MCF 10A (cell line): ENCODE measurements at regions of chr5 and their contacts with region 1.

Region 1: DNA sequence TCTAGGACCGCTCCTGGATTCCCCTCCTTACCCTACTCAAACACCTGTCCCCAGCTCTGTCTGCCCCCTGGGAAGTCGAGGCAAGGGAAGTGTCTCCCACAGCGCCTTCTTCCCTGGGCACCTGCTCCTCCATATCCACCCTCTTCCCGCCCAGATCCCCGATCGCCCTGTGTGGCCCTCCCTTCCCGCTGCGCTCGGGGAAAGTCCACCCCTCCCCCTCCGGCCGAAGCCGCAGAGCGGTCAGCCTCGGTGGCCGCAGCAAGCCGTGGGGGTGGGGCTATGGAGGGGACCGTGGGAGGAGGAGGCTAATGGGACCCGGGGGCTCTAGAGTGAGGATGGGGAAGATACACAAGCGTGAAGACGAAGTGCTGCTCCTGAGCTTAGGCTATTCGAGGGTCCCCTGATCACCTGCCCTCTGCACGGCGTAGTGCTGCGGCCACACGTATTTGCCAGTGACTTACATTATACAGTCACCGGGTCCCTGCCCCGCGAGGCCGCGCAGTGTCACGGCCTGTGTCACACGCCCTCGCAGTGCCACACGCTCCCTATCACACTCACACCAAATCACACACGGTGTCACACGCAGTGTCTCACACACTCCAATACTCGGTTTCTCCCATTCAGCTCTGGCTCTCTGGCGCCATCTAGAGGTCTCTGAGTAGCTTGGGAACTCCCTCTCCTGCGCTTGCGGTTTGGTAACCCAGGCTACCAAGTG is 658 bp upstream of the PCDH1 start:
- DNase-seq: peak; percentile 100
- H3K4me3 Mint-ChIP-seq: peak overlapping the region; percentile 80
- H3K27ac Mint-ChIP-seq: no peak overlapping the region
- H3K4me1 Mint-ChIP-seq: peaks cover 30% of the 10 kb centered on the region
- H3K27me3 Mint-ChIP-seq: peaks cover 55% of the 10 kb centered on the region
- CTCF ChIP-seq: peak; percentile 99

Region 2: DNA sequence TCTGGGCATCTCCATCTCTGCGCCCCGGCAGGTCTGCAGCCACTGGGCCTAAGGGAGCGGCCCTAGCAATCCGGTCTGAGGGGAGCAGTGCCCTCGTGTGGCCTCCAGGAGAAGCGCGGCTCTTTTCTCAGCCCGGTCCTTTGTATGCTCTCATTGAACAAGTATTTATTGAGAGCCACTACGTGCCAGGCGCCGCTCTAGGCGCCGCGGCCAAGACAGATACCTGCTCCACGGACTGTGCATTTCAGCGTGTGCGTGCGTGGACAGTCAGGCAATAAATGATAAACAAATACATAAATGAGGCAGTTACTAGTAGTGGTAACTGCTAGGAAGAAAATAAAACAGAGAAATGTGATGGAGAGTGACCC is 1521.2 kb before region 1 on chr5:
- CTCF ChIA-PET with region 1: no interaction called
- POLR2A ChIA-PET with region 1: no interaction called
- intact Hi-C with region 1: no loop called
- DNase-seq: peak; percentile 91
- H3K4me3 Mint-ChIP-seq: peak overlapping the region; percentile 33
- H3K27ac Mint-ChIP-seq: no peak overlapping the region
- H3K4me1 Mint-ChIP-seq: peaks cover 8% of the 10 kb centered on the region
- H3K27me3 Mint-ChIP-seq: no peaks in the 10 kb centered on the region
- CTCF ChIP-seq: peak; percentile 97

Region 3: DNA sequence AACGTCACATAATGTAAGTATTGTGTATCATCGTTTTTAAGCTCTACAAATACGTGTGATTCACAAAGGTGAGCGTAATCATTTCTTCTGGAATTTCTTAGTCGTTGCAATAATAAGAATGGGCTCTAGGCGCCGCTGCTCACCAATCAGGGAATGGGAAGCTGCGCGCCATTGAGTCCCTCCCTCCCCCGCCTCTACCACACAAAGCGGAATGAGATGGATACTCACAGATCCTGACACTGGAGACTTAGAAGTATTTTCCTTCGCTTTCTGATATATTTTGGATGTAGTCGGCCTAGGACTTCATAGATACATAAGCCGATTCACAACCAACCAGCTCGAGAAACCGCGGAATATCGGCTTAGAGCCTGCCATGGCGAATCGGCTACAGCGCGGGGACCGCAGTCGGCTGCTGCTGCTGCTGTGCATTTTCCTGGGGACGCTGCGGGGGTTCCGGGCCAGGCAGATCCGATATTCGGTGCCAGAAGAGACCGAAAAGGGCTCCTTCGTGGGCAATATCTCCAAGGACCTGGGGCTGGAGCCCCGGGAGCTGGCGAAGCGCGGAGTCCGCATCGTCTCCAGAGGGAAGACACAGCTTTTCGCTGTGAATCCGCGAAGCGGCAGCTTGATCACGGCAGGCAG is 457.9 kb before region 1 on chr5 and contains the start of gene PCDHGA11:
- CTCF ChIA-PET with region 1: no interaction called
- POLR2A ChIA-PET with region 1: no interaction called
- intact Hi-C with region 1: no loop called
- DNase-seq: peak; percentile 33
- H3K4me3 Mint-ChIP-seq: no peak within 1 kb of the TSS
- H3K27ac Mint-ChIP-seq: no peak within 1 kb of the TSS
- H3K4me1 Mint-ChIP-seq: no peaks in the 10 kb centered on the region
- H3K27me3 Mint-ChIP-seq: no peaks in the 10 kb centered on the region
- CTCF ChIP-seq: peak; percentile 18
- total RNA-seq, gene PCDHGA11: 0.30 and 0.76 TPM in 2 replicates

Region 4: DNA sequence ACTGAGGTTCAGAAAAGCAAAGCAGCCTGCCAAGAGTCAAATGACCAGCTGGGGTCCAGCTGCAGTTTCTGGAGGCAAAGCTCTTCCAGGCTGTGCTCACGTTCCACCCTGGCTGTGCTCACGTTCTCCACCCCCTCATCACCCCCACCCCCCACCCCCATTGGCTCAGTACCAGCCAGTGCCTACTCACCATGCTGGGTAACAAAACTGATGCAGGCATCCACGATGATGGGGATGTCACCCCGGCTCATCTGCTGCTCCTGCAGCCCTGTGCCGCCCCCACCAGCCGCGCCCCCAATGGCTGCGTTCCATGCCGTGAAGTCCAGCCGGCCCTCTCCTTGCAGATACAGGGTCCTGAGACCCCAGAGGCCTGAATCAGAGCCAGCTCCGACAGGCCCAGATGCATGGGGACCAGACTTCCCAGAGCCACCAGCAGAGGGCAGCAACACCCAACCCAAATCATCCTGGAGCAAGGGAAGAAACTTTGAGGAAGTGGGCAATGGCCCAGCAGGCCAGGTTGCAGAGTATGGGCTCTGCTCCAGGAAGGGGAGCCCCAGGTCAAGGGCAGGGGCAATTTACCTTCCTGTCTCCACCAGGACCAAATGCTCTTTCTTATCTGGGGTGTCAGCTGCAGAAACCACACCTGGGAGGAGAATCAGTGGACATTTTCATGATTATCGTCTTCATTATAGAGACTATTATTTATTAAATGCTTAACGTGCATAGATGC is 214.0 kb before region 1 on chr5:
- CTCF ChIA-PET with region 1: interaction called, 72 read pairs
- POLR2A ChIA-PET with region 1: interaction called, 4 read pairs
- intact Hi-C with region 1: loop called (anchors 1 kb)
- DNase-seq: peak; percentile 83
- H3K4me3 Mint-ChIP-seq: no peak overlapping the region
- H3K27ac Mint-ChIP-seq: no peak overlapping the region
- H3K4me1 Mint-ChIP-seq: peaks cover 4% of the 10 kb centered on the region
- H3K27me3 Mint-ChIP-seq: no peaks in the 10 kb centered on the region
- CTCF ChIP-seq: peak; percentile 94

Region 5: DNA sequence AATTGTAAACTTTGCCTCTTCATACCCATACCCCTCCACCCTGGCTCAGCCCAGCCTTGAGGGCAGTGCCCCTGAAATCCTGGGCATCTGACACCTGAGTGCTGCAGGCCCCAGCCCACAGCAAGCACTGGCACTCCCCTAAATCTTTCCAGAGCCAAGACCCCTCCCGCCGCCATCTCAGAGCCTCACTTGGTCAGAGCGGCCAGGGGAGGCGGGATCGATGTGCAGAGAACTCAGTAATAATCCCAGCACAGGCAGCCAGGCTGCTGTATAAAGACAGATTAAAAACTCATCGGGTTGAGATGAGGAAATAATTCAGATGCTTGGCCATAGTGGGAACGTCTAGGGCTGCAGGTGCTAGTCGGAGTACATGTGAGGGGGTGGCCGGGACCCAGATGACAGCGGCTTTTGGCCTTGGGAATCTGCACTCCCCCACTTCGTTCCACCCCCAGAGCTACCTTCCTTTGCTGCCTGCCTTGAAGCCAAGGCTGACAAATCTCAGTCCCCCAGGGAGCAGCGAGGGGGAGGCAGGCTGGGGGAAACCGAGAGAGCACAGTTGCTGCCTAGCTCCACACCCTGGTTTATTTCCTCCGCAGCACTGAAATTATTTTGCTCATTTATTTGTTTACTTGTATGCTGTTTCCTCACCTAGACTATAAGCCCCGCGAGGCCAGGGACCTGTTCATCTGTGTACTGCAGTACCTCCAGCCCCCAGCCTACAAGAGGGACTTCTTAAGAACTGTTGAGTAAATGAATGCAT is 177.3 kb before region 1 on chr5:
- CTCF ChIA-PET with region 1: interaction called, 677 read pairs
- POLR2A ChIA-PET with region 1: interaction called, 4 read pairs
- intact Hi-C with region 1: loop called (anchors 1 kb)
- DNase-seq: no peak
- H3K4me3 Mint-ChIP-seq: no peak overlapping the region
- H3K27ac Mint-ChIP-seq: no peak overlapping the region
- H3K4me1 Mint-ChIP-seq: no peaks in the 10 kb centered on the region
- H3K27me3 Mint-ChIP-seq: peaks cover 19% of the 10 kb centered on the region
- CTCF ChIP-seq: no peak

Region 6: GRCh38 chr5:141805874-141806595 is 72.8 kb before region 1 on chr5:
- CTCF ChIA-PET with region 1: interaction called, 18 read pairs
- POLR2A ChIA-PET with region 1: no interaction called
- intact Hi-C with region 1: no loop called
- DNase-seq: no peak
- H3K4me3 Mint-ChIP-seq: no peak overlapping the region
- H3K27ac Mint-ChIP-seq: no peak overlapping the region
- H3K4me1 Mint-ChIP-seq: no peaks in the 10 kb centered on the region
- H3K27me3 Mint-ChIP-seq: peaks cover 73% of the 10 kb centered on the region
- CTCF ChIP-seq: no peak

Region 7: GRCh38 chr5:141889282-141889871 is 10.5 kb after region 1 on chr5:
- CTCF ChIA-PET with region 1: interaction called, 46 read pairs
- POLR2A ChIA-PET with region 1: interaction called, 5 read pairs
- intact Hi-C with region 1: no loop called
- DNase-seq: peak; percentile 45
- H3K4me3 Mint-ChIP-seq: no peak overlapping the region
- H3K27ac Mint-ChIP-seq: no peak overlapping the region
- H3K4me1 Mint-ChIP-seq: no peaks in the 10 kb centered on the region
- H3K27me3 Mint-ChIP-seq: peaks cover 48% of the 10 kb centered on the region
- CTCF ChIP-seq: peak; percentile 60

Region 8: GRCh38 chr5:141940695-141941271 is 61.9 kb after region 1 on chr5:
- CTCF ChIA-PET with region 1: interaction called, 14 read pairs
- POLR2A ChIA-PET with region 1: no interaction called
- intact Hi-C with region 1: no loop called
- DNase-seq: no peak
- H3K4me3 Mint-ChIP-seq: no peak overlapping the region
- H3K27ac Mint-ChIP-seq: peak overlapping the region; percentile 28
- H3K4me1 Mint-ChIP-seq: peaks cover 9% of the 10 kb centered on the region
- H3K27me3 Mint-ChIP-seq: no peaks in the 10 kb centered on the region
- CTCF ChIP-seq: no peak

Region 9: GRCh38 chr5:141992349-141992963 is 113.6 kb after region 1 on chr5:
- CTCF ChIA-PET with region 1: no interaction called
- POLR2A ChIA-PET with region 1: no interaction called
- intact Hi-C with region 1: no loop called
- DNase-seq: peak; percentile 88
- H3K4me3 Mint-ChIP-seq: no peak overlapping the region
- H3K27ac Mint-ChIP-seq: no peak overlapping the region
- H3K4me1 Mint-ChIP-seq: no peaks in the 10 kb centered on the region
- H3K27me3 Mint-ChIP-seq: no peaks in the 10 kb centered on the region
- CTCF ChIP-seq: peak; percentile 82

Region 10: GRCh38 chr5:142659405-142659804 is 780.5 kb after region 1 on chr5:
- CTCF ChIA-PET with region 1: no interaction called
- POLR2A ChIA-PET with region 1: no interaction called
- intact Hi-C with region 1: no loop called
- DNase-seq: no peak
- H3K4me3 Mint-ChIP-seq: no peak overlapping the region
- H3K27ac Mint-ChIP-seq: no peak overlapping the region
- H3K4me1 Mint-ChIP-seq: no peaks in the 10 kb centered on the region
- H3K27me3 Mint-ChIP-seq: no peaks in the 10 kb centered on the region
- CTCF ChIP-seq: no peak